Heart left ventricle (tissue), 16 donors: ENCODE measurements at regions of chr7 and their contacts with region 1.

Region 1: GRCh38 chr7:35701287-35701900 is 6.5 kb upstream of the HERPUD2 start:
- DNase-seq: no peak
- ATAC-seq: no peak
- H3K4me3 ChIP-seq: no peak overlapping the region
- H3K27ac ChIP-seq: no peak overlapping the region
- H3K4me1 ChIP-seq: peaks cover 0 to 2% (median 0%) of the 10 kb centered on the region in 12 donors
- H3K27me3 ChIP-seq: no peaks in the 10 kb centered on the region
- CTCF ChIP-seq: no peak
- POLR2A ChIP-seq: no peak

Region 2: GRCh38 chr7:35617041-35617440 is 84.4 kb before region 1 on chr7:
- intact Hi-C with region 1: no loop called
- DNase-seq: no peak
- ATAC-seq: no peak
- H3K4me3 ChIP-seq: no peak overlapping the region
- H3K27ac ChIP-seq: no peak overlapping the region
- H3K4me1 ChIP-seq: no peaks in the 10 kb centered on the region
- H3K27me3 ChIP-seq: no peaks in the 10 kb centered on the region
- CTCF ChIP-seq: no peak
- POLR2A ChIP-seq: no peak

Region 3: DNA sequence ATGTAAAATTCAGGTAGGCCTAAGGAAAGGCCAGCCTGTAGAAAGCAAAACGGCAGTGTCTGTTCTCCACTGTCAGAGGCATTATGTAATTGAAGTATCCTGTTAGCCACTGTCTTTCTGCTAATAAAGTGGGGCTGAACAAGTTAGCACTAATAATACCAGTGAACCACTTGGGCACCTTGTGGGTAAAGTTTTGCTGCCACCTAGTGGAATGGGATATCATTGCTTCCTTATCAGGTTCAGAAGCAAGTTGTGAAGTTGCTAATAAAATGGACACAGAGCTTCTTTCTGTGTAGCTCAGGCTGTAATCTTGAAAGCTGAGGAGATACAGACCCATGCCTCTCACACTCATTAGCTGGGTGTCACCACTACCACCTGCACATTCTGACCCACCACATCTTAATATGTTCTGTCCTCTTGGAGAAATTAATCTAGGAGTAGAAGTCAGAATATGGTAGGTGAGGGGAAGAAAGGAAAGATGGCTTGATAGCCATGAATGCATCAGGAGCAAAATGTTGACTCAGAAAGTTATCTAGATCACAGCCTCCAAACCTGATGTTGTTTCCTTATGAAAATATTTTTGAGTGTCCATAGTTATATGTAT is 274.6 kb after region 1 on chr7:
- intact Hi-C with region 1: loop called in 3 of 10 experiments (anchors 5 to 10 kb)
- DNase-seq: peak in 1 of 5 donors; percentile 33
- ATAC-seq: peak; percentile 69 to 87 (median 82)
- H3K4me3 ChIP-seq: no peak overlapping the region
- H3K27ac ChIP-seq: no peak overlapping the region
- H3K4me1 ChIP-seq: peaks cover 0 to 7% (median 0%) of the 10 kb centered on the region in 12 donors
- H3K27me3 ChIP-seq: peaks cover 0 to 19% (median 0%) of the 10 kb centered on the region in 9 donors
- CTCF ChIP-seq: peak; percentile 80 to 88 (median 84)
- POLR2A ChIP-seq: no peak

Region 4: DNA sequence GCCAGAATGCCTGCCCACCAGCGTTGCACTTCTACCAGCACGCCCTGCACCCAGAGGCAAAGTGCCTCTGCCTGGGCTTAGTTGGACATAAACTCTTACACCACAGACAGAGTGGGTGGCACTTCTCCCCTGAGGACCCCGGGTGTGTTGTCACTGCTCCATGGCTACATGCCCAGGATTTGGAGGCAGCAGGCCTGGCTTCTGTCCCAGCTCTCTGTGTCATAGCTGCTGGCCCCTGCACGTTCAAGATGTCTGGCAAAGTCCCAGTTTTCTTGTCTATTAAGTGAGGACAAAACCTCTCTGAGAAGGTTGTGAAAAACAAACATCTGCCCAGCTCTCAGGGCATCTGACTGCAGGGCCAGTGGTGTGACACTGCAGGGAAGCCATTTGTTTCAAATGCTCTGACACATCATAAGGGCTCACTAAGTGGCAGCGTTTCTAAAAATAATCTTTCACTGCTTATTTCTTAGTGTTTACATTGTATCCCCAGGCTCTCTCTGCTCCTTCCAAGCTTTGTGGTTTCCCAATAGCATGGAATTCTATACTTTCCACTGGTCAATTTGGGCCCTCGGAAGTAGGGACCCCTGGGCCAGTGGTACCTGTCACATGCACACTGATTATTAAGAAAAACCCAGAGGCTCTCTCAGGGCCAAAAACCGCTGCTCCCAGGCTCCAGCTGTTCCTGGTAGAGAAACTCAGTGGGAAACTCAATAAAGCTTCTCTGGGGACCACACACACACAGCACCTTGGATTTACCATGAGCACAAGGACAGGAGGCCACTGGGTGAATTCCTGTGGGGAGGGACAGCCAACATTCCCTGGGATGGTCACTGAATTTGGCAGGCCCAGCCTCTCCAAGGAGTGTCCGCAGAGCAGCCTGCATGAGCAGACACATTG is 602.1 kb after region 1 on chr7:
- intact Hi-C with region 1: loop called in 2 of 10 experiments (anchors 10 kb)
- DNase-seq: peak; percentile 88 to 95 (median 90)
- ATAC-seq: peak; percentile 87 to 92 (median 90)
- H3K4me3 ChIP-seq: no peak overlapping the region
- H3K27ac ChIP-seq: peak overlapping the region; percentile 38 to 83 (median 79)
- H3K4me1 ChIP-seq: peaks cover 10 to 72% (median 44%) of the 10 kb centered on the region in 12 donors
- H3K27me3 ChIP-seq: no peaks in the 10 kb centered on the region
- CTCF ChIP-seq: no peak
- POLR2A ChIP-seq: no peak